ENCODE measurements at regions of chr17 and their contacts with region 1.

Region 1: GRCh38 chr17:57861000-57861789 is 11.4 kb upstream of the MRPS23 start:
- DNase-seq: peak in 1 of 5 donors; percentile 41
- H3K4me3 ChIP-seq: peak overlapping the region; percentile 52
- H3K27ac ChIP-seq: peak overlapping the region in 1 of 2 donors; percentile 8
- H3K4me1 ChIP-seq: peaks cover 12% of the 10 kb centered on the region
- H3K27me3 ChIP-seq: no peaks in the 10 kb centered on the region
- CTCF ChIP-seq: no peak
- EP300 ChIP-seq: no peak
- POLR2A ChIP-seq: no peak

Region 2: GRCh38 chr17:57747221-57748017 is 113.8 kb before region 1 on chr17:
- intact Hi-C with region 1: no loop called
- DNase-seq: peak in 3 of 5 donors; percentile 28 to 43 (median 33)
- H3K4me3 ChIP-seq: no peak overlapping the region
- H3K27ac ChIP-seq: no peak overlapping the region
- H3K4me1 ChIP-seq: no peaks in the 10 kb centered on the region
- H3K27me3 ChIP-seq: no peaks in the 10 kb centered on the region
- CTCF ChIP-seq: peak; percentile 65 to 74 (median 71)
- EP300 ChIP-seq: no peak
- POLR2A ChIP-seq: no peak

Region 3: DNA sequence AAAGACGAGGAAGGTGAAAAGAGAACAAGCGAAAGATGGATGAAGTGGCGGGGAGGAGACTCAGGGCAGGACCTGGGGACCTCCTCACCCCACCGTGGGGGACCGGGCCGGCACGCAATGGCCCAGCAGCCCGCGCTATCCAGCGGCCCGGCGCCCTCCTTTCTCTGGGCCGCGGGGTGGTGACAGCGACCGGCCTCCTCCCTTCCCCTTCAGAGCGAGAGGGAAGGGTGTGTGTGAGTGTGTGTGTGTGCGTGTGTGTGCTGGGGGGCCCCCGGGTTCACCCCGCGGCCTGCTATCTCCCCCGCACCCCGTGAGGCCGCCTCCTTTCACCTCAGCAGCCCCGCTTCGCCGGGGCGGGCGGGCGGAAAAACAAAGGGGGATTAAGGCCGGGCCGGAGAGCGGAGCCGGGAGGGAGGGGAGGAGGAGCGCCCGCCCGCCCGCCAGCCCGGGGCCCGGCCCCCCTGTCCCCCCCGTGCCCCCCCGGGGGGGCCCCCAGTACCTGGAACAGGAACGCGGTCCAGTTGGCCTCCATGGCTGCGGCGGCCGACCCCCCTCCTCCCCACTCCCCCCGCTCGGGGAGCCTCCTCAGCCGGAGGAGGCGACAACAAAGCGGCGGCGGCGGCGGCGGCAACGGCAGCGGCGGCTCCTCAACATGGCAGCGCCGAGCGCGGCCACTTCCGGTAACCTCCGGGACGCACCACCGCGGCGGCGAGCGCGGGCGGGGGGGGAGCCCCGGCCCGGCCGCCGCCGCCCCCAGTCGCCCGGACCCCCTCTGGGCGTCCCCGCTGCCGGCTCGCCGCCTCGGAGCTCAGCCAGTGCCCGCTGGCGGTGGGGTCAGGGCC is 126.6 kb after region 1 on chr17 and contains the start of gene VEZF1:
- intact Hi-C with region 1: loop called in 3 of 4 experiments (anchors 2 to 5 kb)
- DNase-seq: peak; percentile 79 to 90 (median 84)
- H3K4me3 ChIP-seq: peak within 1 kb of the TSS; percentile 86
- H3K27ac ChIP-seq: peak within 1 kb of the TSS; percentile 93 to 95
- H3K4me1 ChIP-seq: peaks cover 8% of the 10 kb centered on the region
- H3K27me3 ChIP-seq: no peaks in the 10 kb centered on the region
- CTCF ChIP-seq: no peak
- EP300 ChIP-seq: no peak
- POLR2A ChIP-seq: peak; percentile 17
- total RNA-seq, gene VEZF1: 58.6 to 83.5 (median 72.4) TPM